AG04450 (cell line): ENCODE measurements at regions of chr12 and their contacts with region 1.

Region 1: GRCh38 chr12:59149997-59150642 is 229.8 kb upstream of the LRIG3 start:
- DNase-seq: peak; percentile 43
- H3K4me3 ChIP-seq: no peak overlapping the region
- H3K27ac ChIP-seq: no peak overlapping the region
- H3K27me3 ChIP-seq: no peaks in the 10 kb centered on the region
- CTCF ChIP-seq: peak; percentile 94

Region 2: DNA sequence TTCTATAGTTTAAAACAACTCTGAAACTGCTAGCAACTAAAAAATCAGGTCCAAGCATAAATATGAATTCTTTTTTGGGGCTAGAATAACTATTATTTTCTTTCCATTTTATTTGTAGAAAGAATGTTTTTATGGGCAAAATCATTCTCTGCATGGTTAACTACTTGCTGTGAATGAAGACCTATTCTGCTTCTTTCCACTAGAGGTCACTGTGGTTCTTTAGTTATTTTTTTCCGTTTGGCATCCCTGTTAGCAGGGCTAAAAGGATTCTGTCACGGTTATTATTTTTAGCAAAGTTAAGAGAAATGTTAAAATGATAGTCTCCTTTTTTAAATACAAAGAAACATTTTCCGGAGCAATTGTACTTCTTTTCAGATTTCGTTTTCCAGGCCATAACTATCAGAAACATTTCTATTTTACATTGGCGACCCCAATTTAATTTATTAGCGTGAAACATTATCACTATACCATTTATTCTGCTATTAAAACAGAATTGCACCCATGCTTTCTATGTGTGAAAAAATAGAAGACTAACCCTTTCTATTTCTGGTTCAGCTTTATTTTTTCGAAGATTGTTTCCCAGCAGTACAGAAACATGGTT is 804.0 kb before region 1 on chr12:
- CTCF ChIA-PET with region 1: interaction called, 11 read pairs
- POLR2A ChIA-PET with region 1: no interaction called
- DNase-seq: no peak
- H3K4me3 ChIP-seq: no peak overlapping the region
- H3K27ac ChIP-seq: no peak overlapping the region
- H3K27me3 ChIP-seq: no peaks in the 10 kb centered on the region
- CTCF ChIP-seq: peak; percentile 75

Region 3: DNA sequence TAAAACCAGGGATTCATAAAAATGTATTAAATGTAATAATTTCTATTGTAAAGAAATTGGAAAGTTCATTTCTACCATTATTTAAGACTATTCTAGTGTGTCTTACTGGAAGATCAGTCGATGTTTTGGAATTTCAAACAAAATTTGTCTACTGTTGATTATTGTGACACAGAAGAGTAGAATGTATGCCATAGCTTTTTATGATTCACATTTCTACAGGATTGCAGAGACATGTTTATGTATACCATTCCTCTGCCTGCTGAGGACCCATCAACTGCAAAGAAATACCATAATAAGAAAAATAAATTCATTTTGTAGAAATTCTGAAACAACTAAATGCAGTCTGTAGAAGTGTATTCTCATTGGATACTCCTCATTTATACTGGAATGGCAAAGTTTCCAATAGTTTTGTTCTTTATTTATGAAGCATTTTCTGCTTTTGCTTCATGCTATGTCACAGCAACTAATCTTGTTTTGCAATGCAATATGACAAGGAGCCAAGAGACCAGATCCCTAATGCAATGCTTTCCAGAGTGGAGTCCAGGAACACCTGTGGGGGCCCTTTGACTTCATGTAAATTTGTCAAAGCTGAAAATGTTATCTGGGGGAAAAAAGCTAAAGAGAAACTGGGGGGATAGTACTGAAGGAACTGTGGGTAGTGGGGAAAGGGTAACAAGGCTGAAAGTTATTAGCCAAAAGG is 56.9 kb before region 1 on chr12:
- CTCF ChIA-PET with region 1: interaction called, 10 read pairs
- POLR2A ChIA-PET with region 1: no interaction called
- DNase-seq: peak; percentile 36
- H3K4me3 ChIP-seq: no peak overlapping the region
- H3K27ac ChIP-seq: no peak overlapping the region
- H3K27me3 ChIP-seq: no peaks in the 10 kb centered on the region
- CTCF ChIP-seq: no peak

Region 4: DNA sequence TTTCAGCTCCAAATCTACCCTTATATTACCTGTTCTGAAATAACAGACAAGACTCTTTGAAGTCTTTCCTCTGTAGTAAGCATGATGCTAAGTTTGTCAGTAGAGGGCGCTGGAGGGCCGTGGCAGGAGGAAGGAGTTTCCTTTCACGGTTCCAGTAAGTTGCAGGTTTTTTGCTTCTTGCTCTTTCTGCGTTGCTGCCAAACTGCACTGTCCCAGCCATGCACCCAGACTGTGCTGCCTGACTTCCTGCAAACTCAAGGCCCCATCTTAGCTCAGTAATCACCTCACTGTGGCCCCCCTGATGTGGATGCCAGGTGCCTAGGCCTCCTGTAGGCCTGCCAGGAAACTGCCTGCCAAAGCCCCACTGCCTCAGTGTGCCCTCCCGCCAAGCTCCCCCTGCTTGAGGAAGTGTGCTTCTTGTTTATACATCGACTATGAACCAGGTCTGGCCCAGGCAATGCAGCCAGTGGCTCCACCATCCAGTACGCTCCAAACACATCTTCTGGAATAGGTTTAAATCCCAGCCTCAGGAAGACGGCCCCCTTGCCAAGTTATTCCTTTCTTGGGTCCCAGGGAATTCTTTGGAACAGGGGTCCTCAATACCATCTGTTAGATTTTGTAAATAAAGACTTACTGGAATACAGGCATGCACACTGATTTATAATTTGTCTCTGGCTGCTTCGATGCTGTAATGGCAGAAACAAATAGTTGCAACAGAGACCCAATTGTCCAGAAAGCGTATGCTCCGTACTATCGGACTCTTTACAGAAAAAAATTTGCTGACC is 36.1 kb before region 1 on chr12:
- CTCF ChIA-PET with region 1: interaction called, 77 read pairs
- POLR2A ChIA-PET with region 1: no interaction called
- DNase-seq: peak; percentile 69
- H3K4me3 ChIP-seq: no peak overlapping the region
- H3K27ac ChIP-seq: no peak overlapping the region
- H3K27me3 ChIP-seq: no peaks in the 10 kb centered on the region
- CTCF ChIP-seq: peak; percentile 98

Region 5: GRCh38 chr12:59164991-59165718 is 15.0 kb after region 1 on chr12:
- CTCF ChIA-PET with region 1: interaction called, 36 read pairs
- POLR2A ChIA-PET with region 1: interaction called, 4 read pairs
- DNase-seq: peak; percentile 7
- H3K4me3 ChIP-seq: no peak overlapping the region
- H3K27ac ChIP-seq: no peak overlapping the region
- H3K27me3 ChIP-seq: no peaks in the 10 kb centered on the region
- CTCF ChIP-seq: peak; percentile 61